ENCODE measurements at regions of chr17 and their contacts with region 1.

Region 1: DNA sequence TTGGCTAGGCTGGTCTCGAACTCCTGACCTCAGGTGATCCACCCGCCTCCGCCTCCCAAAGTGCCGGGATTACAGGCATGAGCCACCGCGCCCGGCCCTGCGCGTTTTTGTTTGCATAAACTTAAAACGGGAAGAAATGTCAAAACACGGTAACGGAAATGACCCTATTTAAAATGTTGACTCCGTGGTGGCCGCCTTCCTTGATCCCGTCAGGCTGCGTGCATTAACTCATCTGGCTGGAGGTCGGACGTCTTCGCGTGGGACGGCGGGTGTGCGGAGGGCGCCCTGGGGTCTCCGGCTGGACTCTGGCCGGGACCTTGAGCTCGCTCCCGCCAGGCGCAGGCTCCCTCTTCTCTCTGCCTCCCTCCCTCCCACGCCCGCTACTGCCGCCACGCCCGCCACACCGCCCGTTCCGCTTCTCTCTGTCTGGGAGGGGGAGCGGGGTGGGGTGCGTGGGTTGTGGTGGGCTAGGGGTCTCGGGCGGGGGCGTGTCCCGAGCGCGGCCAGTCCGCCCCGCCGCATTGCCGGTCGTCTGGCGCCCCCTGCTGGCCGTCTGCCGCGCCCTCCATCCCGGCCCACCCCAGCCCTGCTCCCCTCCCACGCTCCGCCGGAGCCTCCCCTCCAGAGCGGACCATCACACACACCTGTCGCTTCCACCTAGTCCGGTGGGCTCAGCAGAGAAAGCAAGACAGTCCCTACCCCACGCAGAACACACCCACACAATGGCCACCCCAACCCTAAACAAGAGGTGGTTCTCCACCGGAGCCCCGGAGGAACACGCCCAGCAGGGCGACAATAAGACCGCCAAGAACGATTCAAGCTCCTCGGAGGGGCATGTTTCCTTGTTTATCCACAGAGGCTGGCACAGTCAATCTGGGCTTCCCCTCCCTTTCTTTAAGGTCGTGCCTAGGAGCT is 1.2 kb upstream of the CCDC42 start:
- DNase-seq: peak; percentile 87
- ATAC-seq: peak; percentile 95

Region 2: GRCh38 chr17:8409966-8410864 is 335.6 kb before region 1 on chr17:
- intact Hi-C with region 1: loop called (anchors 2 kb)
- DNase-seq: peak; percentile 89
- ATAC-seq: peak; percentile 93

Region 3: DNA sequence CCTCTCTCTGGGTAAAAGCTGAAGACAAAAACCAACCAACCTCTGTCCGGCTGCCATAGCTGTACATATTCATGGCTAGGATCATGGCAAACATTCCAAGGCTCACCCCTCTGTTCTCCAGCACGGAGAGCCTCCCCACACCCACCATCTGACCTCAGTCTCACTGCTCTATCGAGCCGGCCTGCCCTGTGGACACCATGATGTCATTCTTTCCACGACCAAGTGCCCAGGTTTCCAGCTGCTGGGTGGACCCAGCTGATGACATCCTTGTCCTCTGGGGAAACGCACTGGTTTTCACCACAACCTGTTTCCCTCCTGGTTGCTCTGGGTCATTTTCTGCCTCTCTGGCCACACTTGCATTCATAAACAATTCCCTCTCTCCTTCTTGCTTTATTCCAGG is 242.5 kb before region 1 on chr17:
- intact Hi-C with region 1: no loop called
- DNase-seq: no peak
- ATAC-seq: peak; percentile 54

Region 4: DNA sequence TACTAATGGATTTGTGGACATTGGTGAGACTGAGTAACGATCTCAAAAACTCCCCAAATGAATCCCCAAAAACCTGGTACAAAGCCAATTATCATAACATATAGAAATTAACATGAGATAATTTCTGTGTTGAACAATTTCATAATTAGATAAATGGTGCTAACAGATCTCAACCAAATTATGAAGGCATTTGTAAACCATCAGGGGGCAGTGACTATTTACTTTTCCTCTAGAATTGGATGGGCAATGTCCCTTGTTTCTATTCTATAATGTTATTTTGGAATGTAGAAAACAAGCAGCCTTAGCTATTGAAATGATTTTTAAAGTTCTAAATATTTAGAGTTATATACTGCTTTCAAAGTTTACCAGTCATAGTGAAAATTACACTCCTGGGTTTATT is 173.1 kb before region 1 on chr17:
- intact Hi-C with region 1: loop called (anchors 2 kb)
- DNase-seq: no peak
- ATAC-seq: no peak